A673 (cell line): ENCODE measurements at regions of chr1 and their contacts with region 1.

Region 1: DNA sequence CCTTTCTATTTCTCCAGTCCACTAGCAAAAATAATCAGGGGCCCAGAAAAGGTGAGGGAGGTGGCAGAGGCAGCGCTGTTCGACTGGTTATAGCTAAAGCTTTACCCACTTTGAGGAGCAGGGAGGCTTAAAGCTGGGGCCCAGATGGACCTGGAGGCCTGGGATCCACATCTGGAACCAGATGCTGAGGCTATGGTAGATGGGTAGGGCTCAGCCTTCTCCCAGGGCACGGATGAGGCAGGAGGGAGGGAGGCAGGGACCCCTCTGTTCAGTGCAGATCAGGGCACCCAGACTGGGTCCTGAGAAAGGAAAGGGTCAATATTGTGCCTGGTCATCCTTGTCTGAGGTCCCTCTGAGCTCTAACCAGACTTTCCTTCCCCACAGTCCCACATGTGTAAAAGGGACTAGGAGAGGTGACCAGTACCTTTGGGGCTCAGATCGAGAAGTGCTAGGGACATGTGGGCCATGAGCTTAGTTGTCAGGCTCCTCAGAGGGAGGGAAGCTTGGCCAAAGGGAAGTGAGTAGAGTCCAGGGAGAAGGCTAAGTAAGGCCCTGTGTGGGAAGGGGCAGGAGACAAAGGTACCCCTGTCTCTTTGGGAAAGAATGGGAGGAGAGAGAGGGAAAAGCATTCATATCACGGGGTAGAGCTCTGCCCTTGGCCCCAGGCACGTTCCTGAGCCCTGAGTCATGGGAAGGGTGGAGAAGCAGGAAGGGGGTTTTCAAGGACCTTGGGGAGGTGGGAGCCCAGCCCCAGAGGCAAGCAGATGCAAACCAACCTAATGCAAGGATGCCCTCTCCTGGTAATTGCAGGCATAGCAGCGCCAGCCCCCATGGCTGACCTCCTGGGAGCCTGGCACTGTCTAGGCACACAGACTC is 15.4 kb downstream of the LMNA start:
- DNase-seq: peak; percentile 97
- H3K4me3 ChIP-seq: no peak overlapping the region
- H3K27ac ChIP-seq: peak overlapping the region; percentile 86
- H3K4me1 ChIP-seq: peaks cover 47% of the 10 kb centered on the region
- H3K27me3 ChIP-seq: no peaks in the 10 kb centered on the region
- CTCF ChIP-seq: peak; percentile 98

Region 2: DNA sequence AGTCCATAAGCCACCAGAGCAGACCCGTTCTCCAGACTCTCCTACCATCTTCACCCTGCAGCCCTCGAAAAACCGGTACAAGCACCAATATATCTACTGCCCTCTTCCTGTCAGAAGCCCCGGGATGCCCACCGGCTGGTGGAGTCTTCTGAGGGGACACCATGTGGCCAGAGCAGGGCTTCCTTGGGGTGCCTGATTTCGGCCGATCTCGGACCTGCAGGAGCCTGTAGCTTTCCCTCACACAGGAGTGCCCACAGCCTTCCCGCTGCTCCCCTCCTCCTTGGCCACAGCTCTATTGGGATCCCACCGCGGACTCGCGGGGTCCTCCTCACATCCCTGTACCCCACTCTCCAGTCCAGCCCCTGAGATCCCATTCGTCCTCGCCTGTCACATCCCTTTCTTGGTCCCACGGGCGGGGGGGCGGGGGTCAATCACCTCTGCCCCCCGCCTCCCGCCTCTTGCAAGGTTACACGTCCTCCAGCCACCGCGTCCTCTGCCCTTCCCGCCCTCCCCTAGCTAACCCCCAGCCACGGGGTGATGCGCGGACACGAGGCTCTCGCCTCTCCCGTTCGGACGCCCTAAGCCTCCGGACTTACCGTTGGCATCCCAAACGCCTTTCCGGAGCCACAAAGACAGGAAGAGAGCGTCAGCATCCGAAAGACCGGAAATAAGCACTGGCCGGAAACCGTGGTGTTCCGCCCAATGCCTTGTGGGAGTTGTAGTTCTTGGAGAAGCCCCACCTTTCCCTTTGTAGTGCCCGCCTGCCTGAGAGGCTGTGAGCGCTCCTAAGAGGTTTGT is 109.5 kb before region 1 on chr1 and contains the start of gene SSR2:
- CTCF ChIA-PET with region 1: no interaction called
- POLR2A ChIA-PET with region 1: no interaction called
- intact Hi-C with region 1: loop called (anchors 10 kb)
- DNase-seq: peak; percentile 95
- H3K4me3 ChIP-seq: peak within 1 kb of the TSS; percentile 62
- H3K27ac ChIP-seq: peak within 1 kb of the TSS; percentile 55
- H3K4me1 ChIP-seq: peaks cover 4% of the 10 kb centered on the region
- H3K27me3 ChIP-seq: no peaks in the 10 kb centered on the region
- CTCF ChIP-seq: no peak
- total RNA-seq, gene SSR2: 220 and 233 TPM in 2 replicates

Region 3: GRCh38 chr1:156060937-156061636 is 68.9 kb before region 1 on chr1 and contains the start of gene RAB25:
- CTCF ChIA-PET with region 1: no interaction called
- POLR2A ChIA-PET with region 1: no interaction called
- intact Hi-C with region 1: no loop called
- DNase-seq: peak; percentile 71
- H3K4me3 ChIP-seq: no peak within 1 kb of the TSS
- H3K27ac ChIP-seq: peak within 1 kb of the TSS; percentile 64
- H3K4me1 ChIP-seq: peaks cover 13% of the 10 kb centered on the region
- H3K27me3 ChIP-seq: no peaks in the 10 kb centered on the region
- CTCF ChIP-seq: no peak
- total RNA-seq, gene RAB25: 0.47 and 0.66 TPM in 2 replicates

Region 4: GRCh38 chr1:156096640-156097391 is 33.1 kb before region 1 on chr1:
- CTCF ChIA-PET with region 1: interaction called, 56 read pairs
- POLR2A ChIA-PET with region 1: no interaction called
- intact Hi-C with region 1: no loop called
- DNase-seq: peak; percentile 90
- H3K4me3 ChIP-seq: no peak overlapping the region
- H3K27ac ChIP-seq: no peak overlapping the region
- H3K4me1 ChIP-seq: peaks cover 15% of the 10 kb centered on the region
- H3K27me3 ChIP-seq: no peaks in the 10 kb centered on the region
- CTCF ChIP-seq: peak; percentile 99

Region 5: GRCh38 chr1:156146020-156146768 is 16.2 kb after region 1 on chr1:
- CTCF ChIA-PET with region 1: interaction called, 12 read pairs
- POLR2A ChIA-PET with region 1: no interaction called
- intact Hi-C with region 1: no loop called
- DNase-seq: peak; percentile 93
- H3K4me3 ChIP-seq: peak overlapping the region; percentile 26
- H3K27ac ChIP-seq: no peak overlapping the region
- H3K4me1 ChIP-seq: peaks cover 10% of the 10 kb centered on the region
- H3K27me3 ChIP-seq: no peaks in the 10 kb centered on the region
- CTCF ChIP-seq: peak; percentile 78

Region 6: GRCh38 chr1:156241311-156241811 is 111.4 kb after region 1 on chr1:
- CTCF ChIA-PET with region 1: no interaction called
- POLR2A ChIA-PET with region 1: no interaction called
- intact Hi-C with region 1: no loop called
- DNase-seq: no peak
- H3K4me3 ChIP-seq: no peak overlapping the region
- H3K27ac ChIP-seq: no peak overlapping the region
- H3K4me1 ChIP-seq: peaks cover 6% of the 10 kb centered on the region
- H3K27me3 ChIP-seq: no peaks in the 10 kb centered on the region
- CTCF ChIP-seq: no peak

Region 7: GRCh38 chr1:156773607-156774006 is 643.7 kb after region 1 on chr1:
- CTCF ChIA-PET with region 1: no interaction called
- POLR2A ChIA-PET with region 1: no interaction called
- intact Hi-C with region 1: no loop called
- DNase-seq: no peak
- H3K4me3 ChIP-seq: no peak overlapping the region
- H3K27ac ChIP-seq: no peak overlapping the region
- H3K4me1 ChIP-seq: peaks cover 15% of the 10 kb centered on the region
- H3K27me3 ChIP-seq: no peaks in the 10 kb centered on the region
- CTCF ChIP-seq: no peak